Posterior vena cava (tissue), 2 donors: ENCODE measurements at regions of chr9 and their contacts with region 1.

Region 1: DNA sequence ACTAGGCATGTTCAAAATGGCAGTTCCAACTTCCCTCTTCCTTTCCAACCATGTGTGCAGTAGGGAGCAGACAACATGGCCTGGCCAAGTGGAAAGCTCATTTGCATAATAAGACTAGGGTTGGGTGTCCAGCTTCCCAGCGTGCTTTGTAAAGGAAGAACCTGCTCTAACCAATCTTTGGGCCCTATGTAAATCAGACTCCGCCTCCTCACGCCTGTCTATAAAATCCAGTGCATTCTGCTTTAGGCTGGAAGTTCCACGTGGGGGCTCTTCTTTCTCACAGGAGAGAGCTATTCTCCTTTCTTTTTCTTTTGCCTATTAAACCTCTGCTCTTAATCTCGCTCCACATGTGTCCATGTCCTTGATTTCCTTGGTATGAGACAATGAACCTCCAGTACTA is 83.4 kb downstream of the GCNT1 start:
- DNase-seq: no peak

Region 2: DNA sequence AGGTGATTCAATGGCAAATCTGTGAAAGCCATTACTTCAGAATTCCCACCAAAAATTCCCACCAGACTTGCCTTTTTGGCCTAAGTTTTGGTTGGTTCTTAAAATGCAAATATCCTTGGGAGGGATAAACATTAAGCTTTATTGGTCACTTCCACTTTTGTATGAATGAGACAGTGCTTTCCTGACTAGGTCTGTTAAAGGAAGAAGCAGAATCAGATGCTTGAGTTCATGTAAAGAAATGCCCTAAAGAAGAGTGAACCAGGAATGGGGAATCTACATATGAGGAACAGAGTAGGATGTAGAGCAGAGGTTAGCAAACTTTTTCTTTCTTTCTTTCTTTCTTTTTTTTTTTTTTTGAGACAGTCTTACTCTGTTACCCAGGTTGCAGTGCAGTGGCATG is 46.0 kb after region 1 on chr9:
- intact Hi-C with region 1: loop called in 1 of 2 experiments (anchors 2 kb)
- DNase-seq: no peak